Mammary epithelial cell (primary cell): ENCODE measurements at regions of chr10 and their contacts with region 1.

Region 1: GRCh38 chr10:987870-988666 is at the start of gene GTPBP4:
- DNase-seq: peak; percentile 93
- H3K4me3 ChIP-seq: peak within 1 kb of the TSS; percentile 89 to 99 (median 98)
- H3K27ac ChIP-seq: peak within 1 kb of the TSS; percentile 93
- H3K4me1 ChIP-seq: peaks cover 32% of the 10 kb centered on the region
- H3K27me3 ChIP-seq: no peaks in the 10 kb centered on the region
- CTCF ChIP-seq: peak in 1 of 2 donors; percentile 19
- total RNA-seq, gene GTPBP4: 31.0 to 114 TPM

Region 2: DNA sequence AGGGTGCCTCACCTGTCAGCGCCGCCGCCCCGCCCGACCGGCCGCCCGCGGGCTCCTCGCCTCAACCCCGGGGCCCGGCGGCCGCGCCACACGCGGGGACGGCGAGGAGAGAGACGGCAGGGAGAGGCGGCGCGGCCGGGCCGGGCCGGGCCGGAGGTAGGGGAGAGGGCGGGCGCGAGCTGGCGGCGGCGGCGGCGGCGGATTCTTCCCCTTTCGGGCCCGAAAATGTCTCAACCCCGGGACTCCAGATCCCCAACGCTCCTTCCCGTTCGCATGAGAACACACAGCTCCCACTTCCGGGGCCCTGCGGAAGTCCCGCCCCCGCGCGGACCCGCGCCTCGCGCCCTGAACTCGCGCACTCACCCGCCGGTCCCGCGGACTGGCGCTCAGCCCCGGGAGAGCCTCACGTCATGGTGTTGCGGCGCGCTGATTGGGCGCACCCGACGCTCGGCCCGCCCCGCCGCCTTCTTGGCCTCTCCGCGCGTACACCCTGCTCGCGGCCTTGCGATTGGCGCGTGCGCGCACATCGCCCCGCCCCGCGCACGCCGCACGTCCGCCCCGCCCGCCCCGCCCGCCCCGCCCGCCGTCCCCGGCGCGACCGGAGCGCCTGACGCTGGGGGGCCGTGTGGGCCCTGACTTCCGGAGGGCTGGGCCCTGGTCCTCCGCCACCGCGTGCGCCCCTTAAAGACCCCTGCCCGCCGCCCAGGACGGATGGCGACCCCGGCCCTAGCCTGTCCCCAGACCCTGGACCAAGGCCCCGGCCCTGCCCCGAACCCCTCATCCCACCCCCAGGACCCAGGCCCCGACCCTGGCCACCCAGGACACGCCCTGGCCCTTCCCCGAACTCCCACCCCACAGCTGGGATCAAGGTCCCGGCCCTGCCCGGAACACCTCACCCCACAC is 56.4 kb before region 1 on chr10 and contains the start of gene LARP4B:
- CTCF ChIA-PET with region 1: no interaction called
- dilution Hi-C with region 1: loop called (anchors 5 kb)
- in situ Hi-C with region 1: loop called in 1 of 2 experiments (anchors 5 kb)
- intact Hi-C with region 1: loop called (anchors 2 kb)
- DNase-seq: peak; percentile 98
- H3K4me3 ChIP-seq: peak within 1 kb of the TSS; percentile 61 to 87 (median 86)
- H3K27ac ChIP-seq: peak within 1 kb of the TSS; percentile 83
- H3K4me1 ChIP-seq: peaks cover 14% of the 10 kb centered on the region
- H3K27me3 ChIP-seq: no peaks in the 10 kb centered on the region
- CTCF ChIP-seq: no peak
- total RNA-seq, gene LARP4B: 49.8 to 103 TPM

Region 3: DNA sequence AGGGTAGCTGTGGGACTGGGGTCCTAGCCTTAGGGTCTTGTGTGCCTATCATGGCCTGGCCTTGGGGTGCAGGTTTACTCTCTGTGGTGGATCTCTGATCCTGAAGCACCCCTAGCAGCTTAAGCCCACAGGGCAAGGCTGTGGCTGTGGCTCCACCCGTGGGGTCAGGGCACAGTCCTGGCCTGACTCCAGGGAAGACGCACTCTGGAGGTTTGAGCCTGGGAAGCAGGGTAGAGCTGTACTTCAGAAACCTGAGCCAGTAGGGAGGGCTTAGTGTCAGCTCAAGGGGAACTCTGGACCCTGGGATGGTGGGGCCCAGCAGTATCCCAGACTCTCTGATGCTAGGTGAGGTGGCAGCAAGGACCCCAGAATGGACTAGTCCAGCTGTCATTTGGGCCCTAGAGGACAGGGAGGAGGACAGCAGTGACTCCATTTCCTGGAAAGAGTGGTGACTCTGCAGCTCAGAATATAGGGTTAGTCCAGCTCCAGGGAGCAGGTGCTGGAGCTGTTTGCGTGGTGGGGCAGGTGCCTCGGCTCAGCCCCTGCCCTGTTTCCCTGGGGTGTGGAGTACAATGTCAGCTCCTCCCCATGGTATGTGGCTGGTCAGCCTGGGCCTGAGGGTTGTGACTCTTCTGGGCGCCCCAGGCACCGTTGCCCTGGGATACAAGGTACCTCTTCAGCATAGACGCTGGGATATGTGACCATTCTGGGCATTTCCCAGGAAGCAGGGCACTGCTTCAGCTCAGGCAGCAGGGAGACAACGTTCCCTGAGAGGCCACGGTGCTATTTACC is 16.0 kb after region 1 on chr10:
- CTCF ChIA-PET with region 1: no interaction called
- dilution Hi-C with region 1: no loop called
- in situ Hi-C with region 1: no loop called
- intact Hi-C with region 1: no loop called
- DNase-seq: no peak
- H3K4me3 ChIP-seq: no peak overlapping the region
- H3K27ac ChIP-seq: no peak overlapping the region
- H3K4me1 ChIP-seq: no peaks in the 10 kb centered on the region
- H3K27me3 ChIP-seq: no peaks in the 10 kb centered on the region
- CTCF ChIP-seq: no peak

Region 4: DNA sequence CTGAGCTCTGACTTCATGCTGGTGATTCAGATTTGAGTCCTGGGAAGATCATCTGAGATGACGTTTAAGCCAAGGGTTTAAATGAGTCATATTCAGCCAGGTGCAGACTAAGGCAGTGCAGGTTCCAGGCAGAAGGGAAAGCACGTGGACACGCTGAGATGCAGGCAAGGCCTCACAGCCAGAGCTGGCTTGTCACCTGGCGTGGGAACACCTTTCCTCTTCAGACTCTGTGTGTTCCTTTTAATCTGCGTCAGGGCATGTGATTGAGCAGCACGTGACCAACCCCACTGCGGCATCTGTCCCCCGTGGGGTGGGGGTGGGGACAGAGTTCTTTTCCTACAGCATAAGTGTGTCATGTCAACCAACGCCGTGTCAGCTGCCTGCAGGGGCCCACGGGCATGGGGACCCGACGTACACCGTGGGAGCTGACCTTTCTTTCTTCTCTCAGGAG is 48.3 kb after region 1 on chr10:
- CTCF ChIA-PET with region 1: no interaction called
- dilution Hi-C with region 1: loop called (anchors 5 kb)
- in situ Hi-C with region 1: no loop called
- intact Hi-C with region 1: no loop called
- DNase-seq: peak; percentile 93
- H3K4me3 ChIP-seq: no peak overlapping the region
- H3K27ac ChIP-seq: peak overlapping the region; percentile 13
- H3K4me1 ChIP-seq: peaks cover 17% of the 10 kb centered on the region
- H3K27me3 ChIP-seq: no peaks in the 10 kb centered on the region
- CTCF ChIP-seq: no peak